PC-3 (cell line): ENCODE measurements at regions of chr4 and their contacts with region 1.

Region 1: DNA sequence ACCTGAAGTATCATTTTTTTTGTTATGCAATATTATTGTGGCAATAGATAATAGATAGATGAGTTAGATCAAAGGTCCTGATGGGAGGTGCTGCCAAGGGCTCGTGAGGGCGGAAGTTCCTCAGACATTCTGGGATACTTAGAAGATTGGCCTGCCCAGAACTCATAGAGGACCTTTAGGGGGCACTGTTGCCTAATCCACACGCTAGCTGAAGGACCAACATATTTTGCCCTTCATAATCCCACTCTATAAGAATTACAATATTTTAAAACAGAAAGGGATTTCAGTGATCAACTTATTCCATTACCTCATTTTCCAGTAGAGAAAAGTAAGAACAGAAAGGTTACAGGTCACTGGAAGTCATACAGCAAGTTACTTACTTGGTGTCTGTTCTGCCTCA is 22.9 kb upstream of the COX7B2 start:
- DNase-seq: peak; percentile 41
- ATAC-seq: no peak
- H3K4me3 ChIP-seq: no peak overlapping the region
- H3K27ac ChIP-seq: no peak overlapping the region
- H3K4me1 ChIP-seq: no peaks in the 10 kb centered on the region
- H3K27me3 ChIP-seq: peaks cover 12% of the 10 kb centered on the region
- CTCF ChIP-seq: peak; percentile 44; the same call in 1 of the 2 replicates

Region 2: GRCh38 chr4:47118192-47118929 is 186.4 kb after region 1 on chr4:
- CTCF ChIA-PET with region 1: no interaction called
- POLR2A ChIA-PET with region 1: no interaction called
- intact Hi-C with region 1: loop called (anchors 10 kb)
- DNase-seq: no peak
- ATAC-seq: no peak
- H3K4me3 ChIP-seq: no peak overlapping the region
- H3K27ac ChIP-seq: no peak overlapping the region
- H3K4me1 ChIP-seq: no peaks in the 10 kb centered on the region
- H3K27me3 ChIP-seq: peaks cover 14% of the 10 kb centered on the region; the same call in 1 of the 2 replicates
- CTCF ChIP-seq: no peak